Heart right ventricle (tissue), 16 donors: ENCODE measurements at regions of chr16 and their contacts with region 1.

Region 1: DNA sequence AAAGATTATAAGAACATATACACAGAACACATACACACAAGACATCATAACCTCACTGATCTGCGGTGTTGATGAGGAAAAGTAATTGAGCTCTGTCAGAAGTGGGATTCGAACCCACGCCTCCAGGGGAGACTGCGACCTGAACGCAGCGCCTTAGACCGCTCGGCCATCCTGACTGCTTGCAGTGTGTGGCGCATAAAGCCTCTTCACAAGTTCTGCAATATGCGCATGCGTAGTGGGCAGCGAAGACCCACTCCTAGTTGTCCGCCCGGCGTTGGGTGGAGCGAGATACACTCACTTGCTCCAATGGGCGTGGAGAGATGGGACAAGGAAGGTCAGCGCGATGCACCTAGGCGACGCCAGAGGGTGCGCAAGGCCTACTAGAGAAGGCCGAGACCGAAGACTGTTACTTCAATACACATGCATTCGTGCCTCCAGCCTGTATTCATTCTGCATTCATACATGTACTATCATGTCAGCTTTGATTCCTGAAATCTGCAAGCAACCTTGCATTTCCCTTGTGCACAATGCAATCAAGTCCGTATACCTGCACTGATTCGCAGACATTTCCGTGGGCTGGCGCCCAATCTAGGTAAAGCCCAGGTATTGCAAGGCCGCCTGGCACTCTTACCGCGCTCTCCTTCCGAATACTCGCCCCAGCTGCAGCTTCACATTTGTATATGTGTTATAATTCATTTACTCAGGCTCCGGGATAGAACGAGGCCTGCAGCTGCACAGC is 16.1 kb upstream of the PLLP start:
- DNase-seq: peak; percentile 96 to 99
- ATAC-seq: peak; percentile 91 to 96 (median 94)
- H3K4me3 ChIP-seq: peak overlapping the region; percentile 16 to 60 (median 52)
- H3K27ac ChIP-seq: peak overlapping the region; percentile 51 to 95 (median 88)
- H3K4me1 ChIP-seq: peaks cover 4 to 44% (median 38%) of the 10 kb centered on the region in 9 donors
- H3K27me3 ChIP-seq: no peaks in the 10 kb centered on the region
- CTCF ChIP-seq: peak; percentile 88 to 98 (median 95)

Region 2: GRCh38 chr16:57185944-57186871 is 114.3 kb before region 1 on chr16 and contains the starts of genes PSME3IP1 and RSPRY1:
- intact Hi-C with region 1: loop called in 1 of 10 experiments (anchors 5 kb)
- DNase-seq: peak; percentile 96 to 100
- ATAC-seq: peak; percentile 96 to 99 (median 98)
- H3K4me3 ChIP-seq: peak within 1 kb of the TSS; percentile 76 to 99 (median 80)
- H3K27ac ChIP-seq: peak within 1 kb of the TSS; percentile 82 to 97 (median 93)
- H3K4me1 ChIP-seq: peaks cover 0 to 49% (median 40%) of the 10 kb centered on the region in 9 donors
- H3K27me3 ChIP-seq: no peaks in the 10 kb centered on the region
- CTCF ChIP-seq: no peak
- total RNA-seq, gene PSME3IP1: 49.6 to 66.8 (median 62.5) TPM
- total RNA-seq, gene RSPRY1: 14.7 to 21.4 (median 18.5) TPM

Region 3: GRCh38 chr16:57372372-57373116 is 72.0 kb after region 1 on chr16 and contains the start of gene CX3CL1:
- intact Hi-C with region 1: loop called in 5 of 10 experiments (anchors 1 to 5 kb)
- DNase-seq: peak; percentile 64 to 83
- ATAC-seq: peak; percentile 70 to 95 (median 89)
- H3K4me3 ChIP-seq: peak within 1 kb of the TSS; percentile 42 to 83 (median 70)
- H3K27ac ChIP-seq: peak within 1 kb of the TSS; percentile 72 to 97 (median 94)
- H3K4me1 ChIP-seq: peaks cover 0 to 59% (median 25%) of the 10 kb centered on the region in 9 donors
- H3K27me3 ChIP-seq: no peaks in the 10 kb centered on the region
- CTCF ChIP-seq: peak in 7 of 9 donors; percentile 24 to 64 (median 39)
- total RNA-seq, gene CX3CL1: 7.8 to 46.3 (median 14.5) TPM

Region 4: GRCh38 chr16:57422026-57422944 is 121.7 kb after region 1 on chr16:
- intact Hi-C with region 1: loop called in 9 of 10 experiments (anchors 1 to 2 kb)
- DNase-seq: peak in 1 of 2 donors; percentile 57
- ATAC-seq: peak in 4 of 8 donors; percentile 36 to 65 (median 48)
- H3K4me3 ChIP-seq: no peak overlapping the region
- H3K27ac ChIP-seq: peak overlapping the region in 1 of 10 donors; percentile 41
- H3K4me1 ChIP-seq: peaks cover 8 to 51% (median 37%) of the 10 kb centered on the region in 9 donors
- H3K27me3 ChIP-seq: no peaks in the 10 kb centered on the region
- CTCF ChIP-seq: peak; percentile 15 to 82 (median 70)

Region 5: DNA sequence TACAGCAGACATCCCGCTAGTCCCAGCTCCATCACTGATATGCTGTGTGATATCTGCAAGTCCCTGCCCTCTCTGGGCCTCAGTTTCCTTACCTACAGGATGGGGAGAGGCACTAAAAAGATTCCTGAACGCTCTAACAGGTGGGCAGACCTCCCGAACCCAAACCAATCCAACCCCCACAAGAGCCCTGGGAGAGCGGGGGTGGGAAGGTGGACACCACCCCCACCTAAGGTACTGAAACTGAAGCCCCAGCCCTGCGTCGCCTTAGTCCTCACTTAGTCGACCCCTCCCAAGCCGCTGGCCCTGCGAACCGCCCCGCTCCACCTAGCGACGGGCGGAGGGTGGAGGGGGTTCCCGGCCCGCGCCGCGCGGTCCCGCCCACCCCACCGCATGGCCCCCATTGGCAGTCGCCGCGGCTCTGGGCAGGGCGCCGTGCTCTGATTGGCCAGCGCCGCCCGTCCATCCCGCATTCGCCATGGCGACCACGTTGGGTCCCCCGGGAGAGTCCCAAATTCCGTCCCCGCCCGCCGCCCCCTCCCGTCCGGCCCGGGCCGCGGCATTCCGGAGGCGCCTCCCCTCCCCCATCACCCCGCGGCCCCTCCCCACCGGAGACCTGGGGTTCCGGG is 235.2 kb after region 1 on chr16:
- intact Hi-C with region 1: loop called in 1 of 10 experiments (anchors 5 kb)
- DNase-seq: peak; percentile 96
- ATAC-seq: peak; percentile 95 to 97 (median 96)
- H3K4me3 ChIP-seq: peak overlapping the region; percentile 74 to 98 (median 90)
- H3K27ac ChIP-seq: peak overlapping the region; percentile 77 to 98 (median 94)
- H3K4me1 ChIP-seq: peaks cover 7 to 68% (median 40%) of the 10 kb centered on the region in 9 donors
- H3K27me3 ChIP-seq: peaks cover 0 to 52% (median 0%) of the 10 kb centered on the region in 7 donors
- CTCF ChIP-seq: peak in 8 of 9 donors; percentile 7 to 53 (median 32)